Activated naive CD4-positive, alpha-beta T cell treated with anti-CD3 and anti-CD28 coated beads for 36 hours (primary cell): ENCODE measurements at regions of chr22 and their contacts with region 1.

Region 1: DNA sequence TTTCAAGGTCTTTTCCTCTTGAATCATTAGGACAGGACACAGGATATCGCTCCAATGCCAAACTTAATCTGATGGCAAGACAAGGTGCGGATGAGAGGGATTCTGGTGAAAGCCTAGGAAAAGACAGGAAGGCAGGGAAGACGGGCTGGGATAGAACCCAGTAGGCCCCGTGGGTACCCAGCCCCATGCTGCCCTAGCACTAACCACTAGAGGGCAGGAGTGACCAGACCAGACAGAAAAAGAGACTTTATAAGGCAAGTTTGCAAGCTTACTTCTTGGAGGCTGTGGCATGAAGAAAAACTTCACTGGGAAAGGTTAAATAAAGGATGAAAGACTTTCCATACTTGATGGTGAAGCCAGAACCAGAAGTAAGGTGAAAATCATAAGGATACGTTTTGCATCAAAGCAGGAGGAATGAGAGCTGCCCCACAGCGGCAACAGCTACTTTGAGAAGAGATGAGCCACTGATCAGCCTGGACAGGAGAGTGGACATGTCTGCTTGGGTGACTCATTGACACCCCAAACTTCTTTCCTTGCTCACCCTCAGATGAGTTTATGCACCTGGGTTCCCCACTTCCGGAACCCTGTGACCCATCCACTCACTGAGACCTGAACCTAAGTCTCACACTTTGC is 39.8 kb downstream of the SYN3 start:
- DNase-seq: peak; percentile 68
- H3K4me3 Mint-ChIP-seq: no peak overlapping the region
- H3K27ac Mint-ChIP-seq: no peak overlapping the region
- H3K4me1 Mint-ChIP-seq: no peaks in the 10 kb centered on the region
- H3K27me3 Mint-ChIP-seq: no peaks in the 10 kb centered on the region

Region 2: GRCh38 chr22:32764330-32765131 is 253.8 kb before region 1 on chr22:
- CTCF ChIA-PET with region 1: no interaction called
- intact Hi-C with region 1: no loop called
- DNase-seq: no peak
- H3K4me3 Mint-ChIP-seq: no peak overlapping the region
- H3K27ac Mint-ChIP-seq: no peak overlapping the region
- H3K4me1 Mint-ChIP-seq: no peaks in the 10 kb centered on the region
- H3K27me3 Mint-ChIP-seq: peaks cover 28% of the 10 kb centered on the region

Region 3: GRCh38 chr22:32991353-32992121 is 26.8 kb before region 1 on chr22:
- CTCF ChIA-PET with region 1: no interaction called
- intact Hi-C with region 1: no loop called
- DNase-seq: no peak
- H3K4me3 Mint-ChIP-seq: no peak overlapping the region
- H3K27ac Mint-ChIP-seq: no peak overlapping the region
- H3K4me1 Mint-ChIP-seq: no peaks in the 10 kb centered on the region
- H3K27me3 Mint-ChIP-seq: no peaks in the 10 kb centered on the region

Region 4: DNA sequence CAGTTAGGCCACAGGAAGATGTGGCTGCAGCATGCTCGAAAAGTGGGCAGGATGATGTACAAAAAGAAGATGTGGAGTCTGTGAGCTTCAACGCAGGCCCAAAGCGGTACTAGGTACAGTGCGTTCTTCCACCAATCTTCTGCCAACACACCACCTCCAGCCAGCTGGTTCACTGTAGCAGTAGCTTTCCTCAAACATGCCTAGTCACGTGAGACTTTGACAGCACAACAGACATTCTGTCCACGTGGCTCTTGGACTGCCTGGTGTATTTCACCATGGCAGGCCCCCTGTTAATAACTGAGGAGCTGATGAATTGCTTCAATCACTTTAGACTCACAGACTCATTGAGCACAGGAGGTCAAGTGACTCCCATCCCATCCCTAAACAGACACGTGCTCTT is 25.8 kb after region 1 on chr22:
- CTCF ChIA-PET with region 1: interaction called, 24 read pairs
- intact Hi-C with region 1: loop called (anchors 1 kb)
- DNase-seq: no peak
- H3K4me3 Mint-ChIP-seq: no peak overlapping the region
- H3K27ac Mint-ChIP-seq: no peak overlapping the region
- H3K4me1 Mint-ChIP-seq: no peaks in the 10 kb centered on the region
- H3K27me3 Mint-ChIP-seq: peaks cover 7% of the 10 kb centered on the region

Region 5: GRCh38 chr22:33049119-33049729 is 30.9 kb after region 1 on chr22:
- CTCF ChIA-PET with region 1: interaction called, 24 read pairs
- intact Hi-C with region 1: loop called (anchors 1 kb)
- DNase-seq: peak; percentile 74
- H3K4me3 Mint-ChIP-seq: no peak overlapping the region
- H3K27ac Mint-ChIP-seq: no peak overlapping the region
- H3K4me1 Mint-ChIP-seq: no peaks in the 10 kb centered on the region
- H3K27me3 Mint-ChIP-seq: peaks cover 28% of the 10 kb centered on the region

Region 6: DNA sequence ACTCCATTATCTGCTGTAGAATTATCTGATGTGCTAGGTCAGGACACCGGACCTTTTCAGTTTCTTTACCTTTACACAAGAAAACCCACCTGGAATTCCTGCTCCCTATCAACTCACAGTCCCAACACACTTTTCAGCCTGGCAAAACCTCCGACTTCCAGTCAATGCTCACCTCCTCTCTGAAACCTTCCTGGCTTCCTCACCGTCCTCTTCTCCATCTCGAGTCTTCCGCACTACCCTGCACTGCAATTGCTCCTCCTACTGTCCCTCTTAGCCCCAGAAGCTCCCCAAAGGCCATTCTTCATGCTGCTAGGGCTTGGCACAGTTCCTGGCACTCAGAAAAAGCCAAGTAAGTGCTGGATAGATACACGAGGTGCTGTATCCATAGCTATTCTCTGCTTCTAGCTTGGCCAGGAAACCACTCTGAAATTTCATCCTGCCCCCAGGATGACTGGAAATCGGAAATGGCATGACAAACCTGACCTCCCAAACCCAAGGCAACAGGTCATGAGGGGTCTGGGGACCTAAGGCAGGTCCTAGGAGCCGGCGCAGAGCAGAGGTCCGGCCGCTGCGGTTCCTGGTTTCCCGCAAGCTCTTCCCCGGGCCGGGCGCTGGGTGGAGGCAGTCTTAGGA is 39.1 kb after region 1 on chr22:
- CTCF ChIA-PET with region 1: interaction called, 11 read pairs
- intact Hi-C with region 1: no loop called
- DNase-seq: no peak
- H3K4me3 Mint-ChIP-seq: no peak overlapping the region
- H3K27ac Mint-ChIP-seq: no peak overlapping the region
- H3K4me1 Mint-ChIP-seq: peaks cover 4% of the 10 kb centered on the region
- H3K27me3 Mint-ChIP-seq: peaks cover 68% of the 10 kb centered on the region

Region 7: GRCh38 chr22:33209930-33210784 is 191.8 kb after region 1 on chr22:
- CTCF ChIA-PET with region 1: interaction called, 16 read pairs
- intact Hi-C with region 1: loop called (anchors 1 kb)
- DNase-seq: peak; percentile 27
- H3K4me3 Mint-ChIP-seq: no peak overlapping the region
- H3K27ac Mint-ChIP-seq: no peak overlapping the region
- H3K4me1 Mint-ChIP-seq: no peaks in the 10 kb centered on the region
- H3K27me3 Mint-ChIP-seq: peaks cover 11% of the 10 kb centered on the region